ENCODE measurements at regions of chr13 and their contacts with region 1.

Region 1: DNA sequence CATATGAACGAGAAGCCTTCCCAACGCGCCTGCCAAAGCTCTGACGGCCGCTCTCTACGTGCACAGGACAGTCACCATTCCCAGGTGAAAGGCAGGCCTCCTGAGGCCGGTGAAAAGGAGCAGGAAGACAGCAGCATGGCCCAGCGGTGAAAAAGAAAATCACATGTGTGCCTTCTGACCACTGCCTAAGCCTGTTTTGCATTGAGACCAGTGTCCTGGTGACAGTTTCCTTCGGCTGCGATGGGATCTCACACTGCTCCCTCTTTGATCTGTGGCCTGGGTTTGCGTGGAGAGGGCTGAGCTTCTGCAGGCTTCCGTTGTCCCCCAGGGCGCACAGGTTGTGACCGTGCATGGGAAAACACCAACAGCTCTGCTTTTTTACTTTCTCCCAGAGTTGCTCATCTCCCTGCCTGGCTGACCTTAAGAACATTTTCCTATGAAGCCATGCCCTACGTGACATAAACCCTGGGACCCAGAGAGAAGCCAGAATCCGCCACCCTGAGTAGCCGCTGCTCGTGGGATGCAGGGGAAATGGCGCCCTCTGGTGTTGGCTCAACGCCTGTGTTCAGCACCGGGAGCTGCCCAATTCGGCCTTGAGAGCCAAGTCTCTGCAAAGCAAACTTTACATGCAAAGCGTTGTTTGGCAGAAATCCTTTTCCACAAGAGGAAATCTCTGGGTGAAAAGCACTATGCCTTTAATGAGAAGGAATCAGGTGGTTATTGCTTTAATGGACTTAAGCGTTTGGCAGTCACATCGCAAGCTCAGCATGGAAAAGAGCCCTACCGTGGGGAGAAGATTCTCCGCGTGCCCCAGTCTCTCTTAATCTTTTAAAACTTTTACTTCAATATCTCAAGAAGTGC is 112.2 kb upstream of the GPR12 start:
- DNase-seq: peak; percentile 6 to 51 (median 25)
- H3K4me3 ChIP-seq: no peak overlapping the region
- H3K4me3 Mint-ChIP-seq: no peak overlapping the region
- H3K27ac ChIP-seq: no peak overlapping the region
- H3K27ac Mint-ChIP-seq: no peak overlapping the region
- H3K4me1 ChIP-seq: no peaks in the 10 kb centered on the region
- H3K4me1 Mint-ChIP-seq: no peaks in the 10 kb centered on the region
- H3K27me3 ChIP-seq: peaks cover 5% of the 10 kb centered on the region
- H3K27me3 Mint-ChIP-seq: peaks cover 3 to 8% of the 10 kb centered on the region in 2 donors

Region 2: DNA sequence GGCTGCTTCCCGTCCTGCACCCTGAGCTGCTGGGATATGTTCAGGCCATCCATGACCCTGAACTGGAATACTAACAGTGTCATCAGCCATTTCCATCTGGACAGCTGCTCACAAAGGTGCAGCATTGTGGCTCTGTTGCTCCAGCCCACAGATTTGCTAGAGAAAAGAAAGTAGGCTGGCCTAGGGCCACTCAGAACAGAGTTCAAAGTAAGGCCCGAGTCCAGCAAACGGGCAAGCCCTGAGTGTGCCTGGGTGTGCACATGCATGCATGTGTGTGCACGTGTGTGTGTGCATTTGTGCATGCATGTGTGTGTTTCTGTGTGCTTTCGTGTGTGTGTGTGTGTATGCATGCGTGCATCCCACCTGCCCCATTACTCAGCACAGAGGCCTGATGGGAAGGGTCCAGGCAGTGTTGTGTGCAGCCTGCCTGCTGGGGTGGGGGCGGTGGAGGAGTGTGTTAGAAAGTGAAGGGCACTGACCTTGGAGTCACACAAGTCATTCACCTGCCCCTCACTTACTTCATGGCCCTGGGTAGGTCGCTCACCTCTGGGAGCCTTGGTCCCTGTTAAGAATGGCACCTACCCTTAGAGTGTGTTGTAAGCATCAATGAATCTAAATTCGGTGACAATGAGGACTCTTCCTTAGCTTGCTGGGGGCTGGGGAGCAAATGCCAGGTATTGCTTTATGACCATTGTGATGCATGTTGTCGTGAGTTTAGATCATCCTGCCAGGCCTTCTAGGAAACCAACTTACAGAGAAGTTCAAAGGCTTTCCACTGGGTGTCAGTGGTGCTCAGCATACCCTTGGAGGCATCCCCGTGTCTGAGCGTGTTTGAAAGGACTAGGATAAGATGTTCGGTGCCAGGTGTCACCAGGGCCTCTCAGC is 165.4 kb before region 1 on chr13:
- CTCF ChIA-PET with region 1: interaction called, 10 read pairs
- POLR2A ChIA-PET with region 1: no interaction called
- DNase-seq: peak in 3 of 5 donors; percentile 26 to 46 (median 33)
- H3K4me3 ChIP-seq: no peak overlapping the region
- H3K4me3 Mint-ChIP-seq: no peak overlapping the region
- H3K27ac ChIP-seq: no peak overlapping the region
- H3K27ac Mint-ChIP-seq: peak overlapping the region in 1 of 8 donors; percentile 11
- H3K4me1 ChIP-seq: no peaks in the 10 kb centered on the region
- H3K4me1 Mint-ChIP-seq: no peaks in the 10 kb centered on the region
- H3K27me3 ChIP-seq: no peaks in the 10 kb centered on the region
- H3K27me3 Mint-ChIP-seq: peaks cover 0 to 12% of the 10 kb centered on the region in 2 donors

Region 3: DNA sequence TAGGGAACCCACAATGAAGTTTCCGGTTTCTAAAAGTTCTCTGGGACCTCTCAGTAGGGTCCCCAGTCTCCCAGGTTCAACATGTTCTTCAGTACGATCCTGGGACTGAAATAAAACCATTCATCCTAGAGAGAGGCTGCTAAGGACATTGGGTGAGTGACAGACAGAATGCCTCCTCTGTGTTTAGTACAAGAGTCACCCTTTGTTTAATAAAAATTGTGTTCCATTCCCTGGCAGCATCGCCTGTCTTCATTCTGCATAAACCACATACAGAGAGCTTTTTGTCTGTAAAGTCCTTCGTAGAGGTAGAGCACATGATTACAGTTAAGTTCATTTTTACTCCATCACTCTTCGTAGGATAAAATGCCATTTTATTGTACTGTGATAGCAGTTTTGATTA is 16.8 kb before region 1 on chr13:
- CTCF ChIA-PET with region 1: no interaction called
- POLR2A ChIA-PET with region 1: no interaction called
- DNase-seq: no peak
- H3K4me3 ChIP-seq: no peak overlapping the region
- H3K4me3 Mint-ChIP-seq: no peak overlapping the region
- H3K27ac ChIP-seq: no peak overlapping the region
- H3K27ac Mint-ChIP-seq: no peak overlapping the region
- H3K4me1 ChIP-seq: no peaks in the 10 kb centered on the region
- H3K4me1 Mint-ChIP-seq: no peaks in the 10 kb centered on the region
- H3K27me3 ChIP-seq: no peaks in the 10 kb centered on the region
- H3K27me3 Mint-ChIP-seq: peaks cover 24 to 62% of the 10 kb centered on the region in 2 donors

Region 4: GRCh38 chr13:26996965-26997752 is 124.4 kb after region 1 on chr13:
- CTCF ChIA-PET with region 1: no interaction called
- POLR2A ChIA-PET with region 1: no interaction called
- DNase-seq: no peak
- H3K4me3 ChIP-seq: no peak overlapping the region
- H3K4me3 Mint-ChIP-seq: no peak overlapping the region
- H3K27ac ChIP-seq: no peak overlapping the region
- H3K27ac Mint-ChIP-seq: peak overlapping the region in 1 of 8 donors; percentile 77
- H3K4me1 ChIP-seq: no peaks in the 10 kb centered on the region
- H3K4me1 Mint-ChIP-seq: peaks cover 0 to 5% (median 4%) of the 10 kb centered on the region in 3 donors
- H3K27me3 ChIP-seq: no peaks in the 10 kb centered on the region
- H3K27me3 Mint-ChIP-seq: peaks cover 19 to 25% of the 10 kb centered on the region in 2 donors

Measured in CD8-positive, alpha-beta memory T cell (primary cell).